ENCODE measurements at regions of chr1 and their contacts with region 1.

Region 1: GRCh38 chr1:224182866-224183590 is at the start of gene DEGS1:
- DNase-seq: peak; percentile 83 to 94
- ATAC-seq: peak; percentile 94 to 95
- H3K4me3 ChIP-seq: peak within 1 kb of the TSS; percentile 93
- H3K27ac ChIP-seq: peak within 1 kb of the TSS; percentile 96 to 97
- H3K4me1 ChIP-seq: peaks cover 11% of the 10 kb centered on the region; the same call in 2 of the 3 replicates
- CTCF ChIP-seq: no peak
- EP300 ChIP-seq: no peak
- POLR2A ChIP-seq: peak; percentile 75
- RAD21 ChIP-seq: no peak
- polyA plus RNA-seq, gene DEGS1: 99.3 and 112 TPM in 2 replicates

Region 2: DNA sequence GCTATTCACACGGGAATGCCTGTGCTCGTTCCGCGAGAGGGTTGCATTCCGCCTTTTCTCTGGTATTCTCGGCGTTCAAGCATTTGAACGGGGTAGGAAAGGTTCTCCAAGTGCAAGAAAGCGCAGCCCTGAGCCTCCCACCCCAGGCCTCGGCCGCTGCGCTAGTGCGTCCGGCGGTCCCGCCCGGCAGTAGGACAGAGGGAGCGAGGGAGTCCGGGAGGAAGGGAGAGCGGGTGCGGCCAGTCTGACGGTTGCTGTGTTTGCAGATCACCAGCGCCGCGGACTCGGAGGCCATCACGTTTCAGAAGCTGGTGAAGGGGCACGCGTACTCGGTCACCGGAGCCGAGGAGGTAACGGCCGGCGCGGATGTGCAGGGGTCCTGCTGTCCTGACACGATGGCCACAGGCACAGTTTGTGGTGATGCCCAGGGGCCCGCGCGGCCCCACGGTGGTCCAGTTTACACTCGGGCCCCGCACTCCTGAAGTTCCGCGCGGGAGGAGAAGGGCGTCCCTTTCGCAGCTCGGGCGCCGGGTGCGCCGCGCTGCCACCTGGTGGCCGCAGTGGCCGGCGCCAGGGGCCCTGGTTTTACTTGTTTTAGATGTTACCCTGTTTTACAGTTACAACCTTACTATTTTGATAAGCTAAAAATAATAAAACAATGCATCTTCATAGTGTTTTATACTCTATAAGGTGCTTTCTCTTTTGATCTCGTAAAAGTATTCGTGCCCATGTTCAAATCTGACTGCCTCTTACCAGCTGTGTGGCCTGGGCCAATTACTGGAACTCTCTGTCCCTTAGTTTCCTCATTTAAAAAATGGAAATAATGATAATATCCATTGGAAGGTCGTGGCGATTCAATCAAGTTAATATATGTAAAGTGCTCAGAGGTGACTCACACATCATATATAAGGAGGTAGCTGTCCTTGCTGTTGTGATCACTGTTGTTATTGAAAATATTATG is 434.0 kb before region 1 on chr1:
- CTCF ChIA-PET with region 1: no interaction called
- POLR2A ChIA-PET with region 1: no interaction called
- DNase-seq: peak; percentile 54 to 67
- ATAC-seq: peak; percentile 61 to 83
- H3K4me3 ChIP-seq: peak overlapping the region; percentile 18; the same call in 2 of the 3 replicates
- H3K27ac ChIP-seq: peak overlapping the region; percentile 80 to 81
- H3K4me1 ChIP-seq: peaks cover 36% of the 10 kb centered on the region
- CTCF ChIP-seq: peak; percentile 95
- EP300 ChIP-seq: no peak
- POLR2A ChIP-seq: no peak
- RAD21 ChIP-seq: peak; percentile 68 to 91

Region 3: DNA sequence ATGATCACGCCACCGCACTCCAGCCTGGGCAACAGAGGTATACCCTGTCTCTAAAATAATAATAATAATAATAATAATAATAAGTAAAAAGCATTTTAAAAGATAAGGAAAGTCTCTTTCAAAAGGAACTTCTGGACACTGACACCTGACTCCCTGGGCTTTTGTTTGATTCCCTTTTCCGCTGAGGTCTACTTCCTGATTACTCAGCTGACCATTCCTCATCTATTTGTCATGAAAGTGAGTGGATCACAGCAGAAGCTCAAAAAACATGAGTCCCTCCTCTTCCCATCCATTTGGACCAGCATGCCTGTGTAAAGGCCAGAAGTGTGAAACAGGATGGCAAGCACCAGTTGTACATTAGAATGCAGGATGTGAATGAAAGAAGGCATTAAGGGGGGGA is 130.3 kb before region 1 on chr1:
- CTCF ChIA-PET with region 1: no interaction called
- POLR2A ChIA-PET with region 1: no interaction called
- DNase-seq: no peak
- ATAC-seq: no peak
- H3K4me3 ChIP-seq: no peak overlapping the region
- H3K27ac ChIP-seq: no peak overlapping the region
- H3K4me1 ChIP-seq: peaks cover 5% of the 10 kb centered on the region; the same call in 2 of the 3 replicates
- CTCF ChIP-seq: no peak
- EP300 ChIP-seq: no peak
- POLR2A ChIP-seq: no peak
- RAD21 ChIP-seq: no peak

Region 4: DNA sequence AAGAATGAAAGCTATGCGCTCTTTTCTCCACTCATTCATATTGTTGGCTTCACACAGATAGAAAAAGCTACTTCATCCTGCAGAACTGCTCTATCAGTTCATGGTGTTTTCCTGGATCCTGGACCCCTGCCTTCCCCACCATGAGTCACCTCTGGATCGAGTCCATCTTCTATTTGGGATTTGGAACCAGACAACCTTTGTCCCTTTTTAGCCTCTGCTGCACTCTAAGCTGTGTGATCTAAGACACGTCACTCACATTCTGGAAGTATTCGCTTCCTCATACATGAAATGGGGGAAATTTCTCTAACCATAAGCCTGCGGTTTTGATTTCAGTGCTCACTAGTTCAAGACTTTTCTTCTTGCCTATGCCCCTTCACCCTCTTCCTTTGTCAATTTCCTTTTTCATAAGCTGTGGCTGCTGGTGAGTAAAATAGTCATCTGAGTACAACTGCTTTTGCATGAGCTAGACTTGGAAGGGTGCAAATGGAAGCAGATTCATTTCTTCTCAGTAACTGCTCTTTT is 14.1 kb before region 1 on chr1:
- CTCF ChIA-PET with region 1: interaction called, 4 read pairs
- POLR2A ChIA-PET with region 1: interaction called, 11 read pairs
- DNase-seq: peak; percentile 24 to 55
- ATAC-seq: peak; percentile 65 to 81; a peak in 4 of 6 replicates
- H3K4me3 ChIP-seq: no peak overlapping the region
- H3K27ac ChIP-seq: peak overlapping the region; percentile 37 to 74; a peak in 4 of 6 replicates
- H3K4me1 ChIP-seq: peaks cover 15% of the 10 kb centered on the region
- CTCF ChIP-seq: no peak
- EP300 ChIP-seq: no peak
- POLR2A ChIP-seq: no peak
- RAD21 ChIP-seq: no peak

Region 5: GRCh38 chr1:224292419-224292818 is 109.4 kb after region 1 on chr1:
- CTCF ChIA-PET with region 1: no interaction called
- POLR2A ChIA-PET with region 1: no interaction called
- DNase-seq: no peak
- ATAC-seq: no peak
- H3K4me3 ChIP-seq: no peak overlapping the region
- H3K27ac ChIP-seq: no peak overlapping the region
- H3K4me1 ChIP-seq: no peaks in the 10 kb centered on the region
- CTCF ChIP-seq: no peak
- EP300 ChIP-seq: no peak
- POLR2A ChIP-seq: no peak
- RAD21 ChIP-seq: no peak

Region 6: GRCh38 chr1:224497714-224498573 is 314.9 kb after region 1 on chr1:
- CTCF ChIA-PET with region 1: no interaction called
- POLR2A ChIA-PET with region 1: no interaction called
- DNase-seq: peak in 1 of 2 experiments; percentile 14
- ATAC-seq: peak in 1 of 2 experiments; percentile 55; a peak in 4 of 6 replicates
- H3K4me3 ChIP-seq: no peak overlapping the region
- H3K27ac ChIP-seq: peak overlapping the region in 1 of 2 experiments; percentile 43; a peak in 2 of 6 replicates
- H3K4me1 ChIP-seq: peaks cover 2% of the 10 kb centered on the region
- CTCF ChIP-seq: no peak
- EP300 ChIP-seq: no peak
- POLR2A ChIP-seq: no peak
- RAD21 ChIP-seq: no peak